Activated CD4-positive, alpha-beta memory T cell treated with anti-CD3 and anti-CD28 coated beads, Interleukin-2, amount 10 ng/mL, durations not matched to agents 7 days and 5 days (primary cell): ENCODE measurements at regions of chr10 and their contacts with region 1.

Region 1: DNA sequence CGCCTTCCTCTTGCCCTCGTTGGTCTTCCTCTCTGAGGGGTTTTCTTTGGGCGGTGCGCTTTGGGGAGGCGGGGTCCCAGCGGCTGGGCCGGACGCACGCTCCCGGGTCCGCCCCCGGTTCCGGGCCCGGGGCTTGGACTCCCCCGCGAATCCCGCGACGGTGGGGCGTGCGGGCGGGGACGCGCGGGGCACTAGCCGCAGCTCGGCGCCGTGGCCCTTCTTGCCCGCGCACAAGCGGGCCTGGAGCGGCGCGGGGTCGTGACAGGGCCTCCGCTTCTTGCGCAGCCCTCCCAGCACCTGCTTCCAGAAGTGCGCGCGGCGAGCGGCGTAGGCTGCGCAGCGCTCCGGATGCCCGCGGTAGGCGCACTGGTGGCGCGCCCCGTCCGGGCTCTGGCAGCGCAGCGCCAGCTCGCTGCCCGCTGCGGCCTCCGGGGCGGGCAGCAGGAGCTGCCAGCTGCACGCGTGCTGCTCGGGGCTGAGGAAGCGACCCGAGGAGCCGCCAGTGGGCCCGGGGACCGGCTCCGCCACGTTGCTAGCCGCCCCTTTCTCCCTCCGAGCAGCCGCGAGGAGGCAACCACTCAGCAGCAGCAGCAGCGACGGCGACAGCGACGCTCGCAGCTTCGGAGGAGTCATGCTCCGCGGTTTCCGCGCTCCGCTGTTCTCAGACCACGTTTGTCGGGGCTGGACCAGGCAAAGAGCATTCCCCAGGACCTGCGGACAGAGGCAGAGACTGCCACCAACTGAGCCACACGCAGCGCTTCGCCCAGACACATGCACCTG is 759 bp downstream of the FGFBP3 start:
- DNase-seq: peak; percentile 77
- H3K4me3 Mint-ChIP-seq: peak overlapping the region; percentile 82
- H3K27ac Mint-ChIP-seq: peak overlapping the region; percentile 68
- H3K4me1 Mint-ChIP-seq: peaks cover 30% of the 10 kb centered on the region
- H3K27me3 Mint-ChIP-seq: peaks cover 11% of the 10 kb centered on the region

Region 2: GRCh38 chr10:91298224-91298871 is 610.2 kb before region 1 on chr10:
- CTCF ChIA-PET with region 1: interaction called, 19 read pairs
- POLR2A ChIA-PET with region 1: interaction called, 3 read pairs
- DNase-seq: peak; percentile 85
- H3K4me3 Mint-ChIP-seq: peak overlapping the region; percentile 40
- H3K27ac Mint-ChIP-seq: peak overlapping the region; percentile 9
- H3K4me1 Mint-ChIP-seq: peaks cover 10% of the 10 kb centered on the region
- H3K27me3 Mint-ChIP-seq: peaks cover 15% of the 10 kb centered on the region

Region 3: DNA sequence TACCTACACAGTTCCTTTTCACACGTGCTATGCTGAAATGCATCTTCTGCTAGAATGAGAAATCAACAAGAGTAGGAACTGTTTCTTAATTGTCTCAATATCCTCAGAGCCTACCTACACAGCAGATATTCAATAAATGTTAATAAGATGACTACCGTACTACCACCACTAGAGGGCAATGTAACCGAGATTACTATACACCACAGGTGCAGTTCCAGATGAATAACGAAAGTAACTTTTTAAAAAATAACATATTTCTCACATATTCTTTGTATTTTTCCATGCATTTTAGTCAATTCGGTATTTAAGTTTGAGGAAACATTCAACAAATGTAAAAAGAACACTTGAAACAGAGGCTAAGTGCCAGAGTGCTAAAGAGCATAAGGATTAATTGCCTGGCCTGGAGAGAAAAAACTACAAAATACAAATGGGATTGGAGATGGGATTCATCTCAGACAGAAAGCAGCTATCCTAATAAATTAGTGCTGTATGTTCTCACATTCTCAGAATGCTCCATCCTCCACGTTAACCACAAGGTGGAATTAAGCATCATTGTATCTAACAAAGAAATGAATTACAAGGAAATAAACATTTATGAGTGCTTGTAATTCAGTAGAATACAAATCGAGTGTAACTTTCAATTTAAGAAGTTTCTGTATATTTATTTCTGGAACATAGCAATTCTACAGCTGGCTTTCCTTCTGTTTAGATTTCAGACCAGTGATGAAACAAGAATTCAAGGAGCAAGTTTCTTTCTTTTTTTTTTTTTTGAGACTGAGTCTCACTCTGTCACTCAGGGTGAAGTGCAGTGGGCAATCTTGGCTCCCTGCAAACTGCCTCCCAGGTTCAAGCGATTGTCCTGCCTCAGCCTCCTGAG is 518.7 kb before region 1 on chr10:
- CTCF ChIA-PET with region 1: interaction called, 12 read pairs
- POLR2A ChIA-PET with region 1: no interaction called
- DNase-seq: no peak
- H3K4me3 Mint-ChIP-seq: no peak overlapping the region
- H3K27ac Mint-ChIP-seq: no peak overlapping the region
- H3K4me1 Mint-ChIP-seq: peaks cover 8% of the 10 kb centered on the region
- H3K27me3 Mint-ChIP-seq: peaks cover 26% of the 10 kb centered on the region

Region 4: GRCh38 chr10:91758303-91759146 is 150.0 kb before region 1 on chr10:
- CTCF ChIA-PET with region 1: interaction called, 28 read pairs
- POLR2A ChIA-PET with region 1: no interaction called
- DNase-seq: no peak
- H3K4me3 Mint-ChIP-seq: no peak overlapping the region
- H3K27ac Mint-ChIP-seq: no peak overlapping the region
- H3K4me1 Mint-ChIP-seq: no peaks in the 10 kb centered on the region
- H3K27me3 Mint-ChIP-seq: peaks cover 51% of the 10 kb centered on the region

Region 5: DNA sequence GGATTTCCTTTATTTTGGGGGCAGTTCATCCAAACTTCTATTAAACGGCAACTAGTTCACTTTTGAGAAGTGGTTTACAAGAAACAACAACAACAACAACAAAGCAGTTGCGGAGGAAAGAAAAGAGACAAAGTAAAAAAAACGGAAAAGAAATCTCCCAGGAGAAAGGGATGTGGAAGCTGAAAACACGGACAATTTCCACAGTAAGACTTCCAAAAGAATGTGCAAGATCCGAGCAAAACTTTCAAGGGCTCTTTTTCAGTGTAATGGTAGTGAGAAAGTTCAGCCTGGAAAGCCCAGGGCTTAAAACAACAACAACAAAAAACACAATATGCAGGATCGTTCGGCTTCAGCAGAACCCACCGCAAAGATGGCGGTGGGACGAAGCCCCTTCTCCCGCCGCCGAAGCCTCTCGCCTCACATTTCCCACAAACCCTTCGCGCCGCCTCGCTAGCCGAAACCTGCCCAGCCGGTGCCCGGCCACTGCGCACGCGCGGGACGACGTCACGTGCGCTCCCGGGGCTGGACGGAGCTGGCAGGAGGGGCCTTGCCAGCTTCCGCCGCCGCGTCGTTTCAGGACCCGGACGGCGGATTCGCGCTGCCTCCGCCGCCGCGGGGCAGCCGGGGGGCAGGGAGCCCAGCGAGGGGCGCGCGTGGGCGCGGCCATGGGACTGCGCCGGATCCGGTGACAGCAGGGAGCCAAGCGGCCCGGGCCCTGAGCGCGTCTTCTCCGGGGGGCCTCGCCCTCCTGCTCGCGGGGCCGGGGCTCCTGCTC is 110.5 kb before region 1 on chr10 and contains the start of gene TNKS2:
- CTCF ChIA-PET with region 1: interaction called, 8 read pairs
- POLR2A ChIA-PET with region 1: interaction called, 27 read pairs
- DNase-seq: peak; percentile 93
- H3K4me3 Mint-ChIP-seq: peak within 1 kb of the TSS; percentile 95
- H3K27ac Mint-ChIP-seq: peak within 1 kb of the TSS; percentile 95
- H3K4me1 Mint-ChIP-seq: peaks cover 50% of the 10 kb centered on the region
- H3K27me3 Mint-ChIP-seq: no peaks in the 10 kb centered on the region
- total RNA-seq, gene TNKS2: 39.1 to 39.4 TPM

Region 6: DNA sequence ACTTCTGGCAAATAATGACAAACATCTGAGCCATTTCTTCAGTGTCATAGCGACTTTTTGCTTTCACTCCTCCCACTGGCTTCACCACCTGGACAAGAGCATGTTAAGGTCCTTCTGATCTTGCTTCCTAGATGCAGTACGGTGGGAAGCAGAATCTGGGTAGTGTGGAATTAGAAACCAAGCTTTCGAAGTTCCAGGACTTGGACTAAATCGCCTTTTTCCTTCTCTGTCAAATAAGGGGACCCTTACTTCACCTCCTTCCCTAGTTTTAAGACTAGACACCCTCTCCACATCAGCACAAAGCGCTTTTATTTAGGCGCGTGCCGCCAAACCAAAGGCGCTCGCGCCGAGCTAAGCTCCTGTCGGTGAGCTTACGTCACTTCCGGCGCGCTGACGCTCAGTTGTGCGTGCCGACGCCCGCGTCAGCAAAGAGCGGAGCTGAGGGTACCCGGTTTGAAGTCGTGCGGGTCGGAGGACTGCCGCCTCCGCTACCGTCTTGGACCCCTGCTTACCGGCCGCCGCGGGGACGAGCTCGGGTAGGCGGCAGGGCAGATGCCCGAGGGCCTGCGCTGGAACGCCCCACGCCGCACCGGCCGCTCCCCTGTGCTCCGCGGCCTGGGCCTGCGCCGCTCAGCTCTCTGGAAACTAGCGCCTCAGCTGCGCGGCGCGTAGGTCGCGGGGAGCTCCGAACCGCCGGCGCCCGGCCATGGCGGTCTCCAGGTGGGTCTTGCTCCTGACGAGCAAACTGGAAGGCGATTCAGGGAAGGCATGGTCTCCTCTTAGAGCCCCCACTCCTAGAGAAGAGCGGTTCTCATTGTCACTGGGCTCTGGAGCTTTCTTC is 15.1 kb after region 1 on chr10 and contains the start of gene BTAF1:
- CTCF ChIA-PET with region 1: interaction called, 26 read pairs
- POLR2A ChIA-PET with region 1: interaction called, 56 read pairs
- DNase-seq: peak; percentile 92
- H3K4me3 Mint-ChIP-seq: peak within 1 kb of the TSS; percentile 94
- H3K27ac Mint-ChIP-seq: peak within 1 kb of the TSS; percentile 96
- H3K4me1 Mint-ChIP-seq: peaks cover 45% of the 10 kb centered on the region
- H3K27me3 Mint-ChIP-seq: peaks cover 2% of the 10 kb centered on the region
- total RNA-seq, gene BTAF1: 51.3 to 54.9 TPM

Region 7: DNA sequence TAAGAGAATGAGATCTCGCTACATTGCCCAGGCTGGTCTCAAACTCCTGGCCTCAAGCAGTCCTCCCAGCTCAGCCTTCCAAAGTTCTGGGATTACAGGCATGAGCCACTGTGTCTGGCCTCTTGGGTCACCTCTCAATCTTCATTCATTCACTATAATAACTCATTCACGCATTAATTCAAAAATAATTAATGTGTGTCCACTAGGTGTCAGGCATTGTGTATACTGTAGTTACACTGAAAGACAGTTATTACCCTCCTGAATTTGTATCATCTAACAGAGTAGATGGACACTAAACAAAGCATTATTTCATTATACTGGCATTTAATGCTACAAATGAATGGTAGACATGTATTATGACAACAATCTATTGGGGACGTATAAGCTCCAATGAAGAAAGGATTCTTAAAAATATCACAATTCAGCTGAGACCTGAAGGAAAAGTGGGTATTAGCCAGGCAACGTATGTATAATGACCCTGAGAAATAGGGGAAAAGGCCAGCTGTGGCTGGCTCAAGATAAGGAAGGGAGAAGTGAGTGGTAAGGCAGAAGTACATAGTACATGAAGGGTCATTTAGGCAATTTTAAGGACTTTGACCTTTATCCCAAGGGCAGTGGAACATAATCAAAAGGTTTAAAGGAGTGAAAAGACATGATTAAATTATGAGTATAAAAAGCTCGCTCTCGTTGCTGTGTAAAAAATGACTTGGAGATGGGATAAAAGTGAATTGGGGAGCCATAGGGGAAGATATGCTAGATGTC is 165.8 kb after region 1 on chr10:
- CTCF ChIA-PET with region 1: no interaction called
- POLR2A ChIA-PET with region 1: no interaction called
- DNase-seq: no peak
- H3K4me3 Mint-ChIP-seq: no peak overlapping the region
- H3K27ac Mint-ChIP-seq: no peak overlapping the region
- H3K4me1 Mint-ChIP-seq: peaks cover 1% of the 10 kb centered on the region
- H3K27me3 Mint-ChIP-seq: no peaks in the 10 kb centered on the region